GM23248 (cell line): ENCODE measurements at regions of chr17 and their contacts with region 1.

Region 1: GRCh38 chr17:44219616-44220212 is at the start of gene UBTF:
- DNase-seq: peak; percentile 77
- H3K4me3 ChIP-seq: peak within 1 kb of the TSS; percentile 85
- H3K27ac ChIP-seq: peak within 1 kb of the TSS; percentile 85
- H3K4me1 ChIP-seq: peaks cover 27% of the 10 kb centered on the region
- H3K27me3 ChIP-seq: no peaks in the 10 kb centered on the region
- total RNA-seq, gene UBTF: 61.1 and 62.3 TPM in 2 replicates

Region 2: DNA sequence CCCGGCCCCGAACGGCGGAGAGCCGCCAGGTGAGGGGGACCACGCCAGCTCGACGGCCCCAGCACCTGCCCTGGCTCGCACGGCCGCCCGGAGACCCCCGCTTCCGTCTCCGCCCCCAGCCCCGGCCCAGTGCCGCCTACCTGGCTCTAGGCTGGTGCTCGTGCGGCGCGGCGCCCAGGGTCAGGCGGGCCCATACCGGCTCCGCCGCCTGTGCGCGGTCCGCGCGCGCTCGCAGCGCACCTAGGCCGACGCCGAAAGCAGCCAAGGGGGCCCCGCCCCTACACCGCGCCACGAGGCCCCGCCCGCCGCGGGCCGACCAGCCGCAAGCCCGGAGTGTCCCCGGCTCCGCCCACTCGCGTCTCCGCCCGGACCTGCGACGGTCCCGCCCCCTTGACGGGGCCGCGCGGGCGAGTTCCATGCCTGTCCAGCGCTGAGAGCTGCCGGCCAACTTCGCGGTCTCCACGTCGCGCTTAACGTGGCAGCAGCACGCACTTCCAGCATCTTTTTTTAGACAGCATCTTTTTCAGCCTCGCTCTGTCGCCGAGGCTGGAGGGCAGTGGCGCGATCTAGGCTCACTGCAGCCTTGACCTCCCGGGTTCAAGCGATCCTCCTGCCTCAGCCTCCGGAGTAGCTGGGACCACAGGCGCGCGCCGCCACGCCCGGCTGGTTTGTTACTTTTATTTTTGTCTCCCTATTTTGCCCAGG is 105.0 kb after region 1 on chr17 and contains the start of gene SLC25A39:
- in situ Hi-C with region 1: loop called (anchors 5 kb)
- DNase-seq: peak; percentile 97
- H3K4me3 ChIP-seq: peak within 1 kb of the TSS; percentile 78
- H3K27ac ChIP-seq: peak within 1 kb of the TSS; percentile 95
- H3K4me1 ChIP-seq: peaks cover 7% of the 10 kb centered on the region; the same call in 1 of the 2 replicates
- H3K27me3 ChIP-seq: no peaks in the 10 kb centered on the region
- total RNA-seq, gene SLC25A39: 96.1 and 118 TPM in 2 replicates